Endothelial cell of umbilical vein (primary cell): ENCODE measurements at regions of chr2 and their contacts with region 1.

Region 1: GRCh38 chr2:96554293-96555145 is 18.0 kb downstream of the ARID5A start:
- DNase-seq: peak; percentile 65
- H3K4me3 ChIP-seq: no peak overlapping the region
- H3K27ac ChIP-seq: no peak overlapping the region
- H3K4me1 ChIP-seq: no peaks in the 10 kb centered on the region
- H3K27me3 ChIP-seq: no peaks in the 10 kb centered on the region
- CTCF ChIP-seq: peak; percentile 91 to 92
- POLR2A ChIP-seq: no peak

Region 2: GRCh38 chr2:96407041-96407918 is 147.2 kb before region 1 on chr2:
- CTCF ChIA-PET with region 1: interaction called, 63 read pairs
- POLR2A ChIA-PET with region 1: no interaction called
- dilution Hi-C with region 1: no loop called
- intact Hi-C with region 1: loop called (anchors 1 kb)
- DNase-seq: peak; percentile 63
- H3K4me3 ChIP-seq: no peak overlapping the region
- H3K27ac ChIP-seq: no peak overlapping the region
- H3K4me1 ChIP-seq: no peaks in the 10 kb centered on the region
- H3K27me3 ChIP-seq: no peaks in the 10 kb centered on the region
- CTCF ChIP-seq: peak; percentile 74 to 86
- POLR2A ChIP-seq: no peak

Region 3: GRCh38 chr2:96527286-96528005 is 27.1 kb before region 1 on chr2:
- CTCF ChIA-PET with region 1: interaction called, 101 read pairs
- POLR2A ChIA-PET with region 1: interaction called, 3 read pairs
- dilution Hi-C with region 1: no loop called
- intact Hi-C with region 1: loop called (anchors 1 kb)
- DNase-seq: peak; percentile 58
- H3K4me3 ChIP-seq: peak overlapping the region; percentile 17 to 53 (median 50)
- H3K27ac ChIP-seq: peak overlapping the region; percentile 77
- H3K4me1 ChIP-seq: peaks cover 33% of the 10 kb centered on the region
- H3K27me3 ChIP-seq: no peaks in the 10 kb centered on the region
- CTCF ChIP-seq: peak; percentile 12 to 64
- POLR2A ChIP-seq: no peak

Region 4: DNA sequence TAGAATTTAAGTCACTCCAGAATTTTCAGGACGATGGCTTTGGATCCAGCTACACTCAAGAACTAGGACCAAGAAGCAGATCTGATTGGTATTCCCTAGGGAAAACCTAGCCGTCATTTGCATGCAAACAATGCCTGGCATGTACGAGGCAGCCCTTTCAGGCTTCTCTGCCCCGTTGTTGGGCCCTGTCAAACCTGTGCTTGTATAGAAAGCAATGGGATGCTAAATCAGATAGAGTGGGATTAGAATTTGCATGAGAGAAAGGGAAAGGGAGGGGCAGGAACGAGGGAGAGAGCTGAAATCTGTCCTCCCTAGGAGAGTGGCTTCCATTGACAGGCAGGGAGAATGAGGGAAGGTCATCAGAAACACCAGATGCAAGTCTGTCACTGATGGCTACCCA is 10.6 kb after region 1 on chr2:
- CTCF ChIA-PET with region 1: interaction called, 51 read pairs
- POLR2A ChIA-PET with region 1: no interaction called
- dilution Hi-C with region 1: no loop called
- intact Hi-C with region 1: no loop called
- DNase-seq: no peak
- H3K4me3 ChIP-seq: no peak overlapping the region
- H3K27ac ChIP-seq: no peak overlapping the region
- H3K4me1 ChIP-seq: no peaks in the 10 kb centered on the region
- H3K27me3 ChIP-seq: no peaks in the 10 kb centered on the region
- CTCF ChIP-seq: no peak
- POLR2A ChIP-seq: no peak

Region 5: DNA sequence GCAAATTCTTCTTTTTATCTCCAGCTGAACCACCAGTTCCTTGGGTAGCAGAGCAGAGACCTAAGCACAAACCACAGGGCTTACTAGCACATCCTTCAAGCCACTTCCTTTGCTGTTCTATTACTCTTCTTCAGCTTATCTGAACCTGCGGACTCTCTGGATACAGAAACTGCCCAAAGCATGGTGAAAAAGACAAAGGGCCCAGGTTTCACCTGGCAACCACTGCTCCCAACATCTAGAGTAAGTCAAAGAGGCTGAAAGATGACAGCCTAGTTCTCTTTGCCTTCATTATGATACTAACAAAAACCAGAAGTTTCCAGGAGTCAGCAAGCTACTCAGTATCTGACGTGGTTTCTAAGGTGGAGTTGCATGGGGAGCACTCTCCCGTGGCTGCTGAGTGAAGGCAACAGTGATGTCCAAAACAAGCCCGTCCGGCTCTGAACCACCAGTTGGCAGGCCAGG is 40.2 kb after region 1 on chr2:
- CTCF ChIA-PET with region 1: interaction called, 11 read pairs
- POLR2A ChIA-PET with region 1: no interaction called
- dilution Hi-C with region 1: no loop called
- intact Hi-C with region 1: no loop called
- DNase-seq: no peak
- H3K4me3 ChIP-seq: no peak overlapping the region
- H3K27ac ChIP-seq: no peak overlapping the region
- H3K4me1 ChIP-seq: no peaks in the 10 kb centered on the region
- H3K27me3 ChIP-seq: no peaks in the 10 kb centered on the region
- CTCF ChIP-seq: no peak
- POLR2A ChIP-seq: no peak

Region 6: DNA sequence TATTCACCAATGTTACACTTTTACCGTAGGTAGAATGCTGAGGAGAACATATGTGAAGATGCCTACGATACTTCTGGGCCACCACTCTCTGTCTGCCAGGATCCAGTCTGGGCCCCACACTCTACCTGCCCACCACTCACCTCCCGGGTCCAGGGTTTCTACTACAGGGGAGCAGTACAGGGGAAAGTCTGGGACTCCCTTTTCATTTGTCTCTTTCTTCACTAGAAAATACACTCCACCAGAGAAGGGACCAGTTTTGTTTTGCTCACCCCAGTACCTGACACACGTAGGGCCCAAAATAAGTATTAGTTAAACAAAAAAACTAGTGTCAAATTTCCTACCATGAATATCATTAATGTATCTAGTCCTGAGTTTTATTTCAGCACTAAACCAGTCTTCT is 62.5 kb after region 1 on chr2:
- CTCF ChIA-PET with region 1: no interaction called
- POLR2A ChIA-PET with region 1: no interaction called
- dilution Hi-C with region 1: no loop called
- intact Hi-C with region 1: no loop called
- DNase-seq: no peak
- H3K4me3 ChIP-seq: no peak overlapping the region
- H3K27ac ChIP-seq: peak overlapping the region; percentile 15
- H3K4me1 ChIP-seq: peaks cover 2% of the 10 kb centered on the region
- H3K27me3 ChIP-seq: no peaks in the 10 kb centered on the region
- CTCF ChIP-seq: no peak
- POLR2A ChIP-seq: no peak

Region 7: DNA sequence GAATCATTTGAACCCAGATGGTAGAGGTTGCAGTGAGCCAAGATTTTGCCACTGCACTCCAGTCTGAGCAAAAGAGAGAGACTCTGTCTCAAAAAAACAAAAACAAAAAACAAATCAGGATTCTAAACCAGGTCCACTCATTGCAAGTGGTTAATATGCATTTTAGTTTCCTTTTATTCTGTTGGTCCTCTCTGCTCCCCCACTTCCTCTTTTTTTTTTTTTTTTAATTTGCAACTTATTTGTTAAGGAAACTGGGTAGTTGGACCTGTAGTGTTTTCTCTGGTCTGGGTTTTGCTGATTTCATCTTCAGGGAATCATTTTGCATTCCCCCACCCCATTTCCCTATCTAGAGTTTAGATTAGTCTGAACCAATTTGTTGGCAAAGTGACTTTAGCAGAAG is 102.0 kb after region 1 on chr2:
- CTCF ChIA-PET with region 1: no interaction called
- POLR2A ChIA-PET with region 1: no interaction called
- dilution Hi-C with region 1: no loop called
- intact Hi-C with region 1: no loop called
- DNase-seq: no peak
- H3K4me3 ChIP-seq: no peak overlapping the region
- H3K27ac ChIP-seq: no peak overlapping the region
- H3K4me1 ChIP-seq: no peaks in the 10 kb centered on the region
- H3K27me3 ChIP-seq: peaks cover 4 to 10% of the 10 kb centered on the region in 2 experiments
- CTCF ChIP-seq: no peak
- POLR2A ChIP-seq: no peak